ENCODE measurements at regions of chr9 and their contacts with region 1.

Region 1: GRCh38 chr9:112705768-112706427 is 12.0 kb downstream of the INIP start:
- DNase-seq: no peak
- ATAC-seq: peak; percentile 71 to 79 (median 76)
- H3K4me3 ChIP-seq: no peak overlapping the region
- H3K27ac ChIP-seq: no peak overlapping the region
- H3K4me1 ChIP-seq: peaks cover 0 to 10% (median 0%) of the 10 kb centered on the region in 12 donors
- H3K27me3 ChIP-seq: no peaks in the 10 kb centered on the region
- CTCF ChIP-seq: peak in 8 of 12 donors; percentile 8 to 48 (median 36)
- POLR2A ChIP-seq: no peak

Region 2: DNA sequence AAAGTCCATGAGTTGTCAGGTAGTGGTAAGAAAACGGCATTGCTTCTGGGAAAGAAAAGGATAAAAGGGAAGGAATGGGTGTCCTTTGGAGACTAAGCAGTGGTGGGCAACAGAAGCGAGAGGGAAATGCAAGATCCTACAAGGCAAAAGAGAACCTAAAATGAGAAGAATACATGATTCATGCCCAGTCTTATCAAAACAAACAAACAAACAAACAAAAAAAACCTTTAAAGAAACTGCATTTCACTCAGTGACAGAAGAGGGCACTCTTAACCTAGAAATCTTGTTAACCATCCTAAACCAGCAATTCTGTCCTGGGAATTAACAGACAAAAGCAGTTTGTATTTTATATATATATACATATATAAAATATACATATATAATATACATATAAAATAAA is 619.3 kb before region 1 on chr9:
- intact Hi-C with region 1: loop called in 5 of 10 experiments (anchors 10 kb)
- DNase-seq: no peak
- ATAC-seq: no peak
- H3K4me3 ChIP-seq: no peak overlapping the region
- H3K27ac ChIP-seq: no peak overlapping the region
- H3K4me1 ChIP-seq: peaks cover 0 to 1% (median 0%) of the 10 kb centered on the region in 12 donors
- H3K27me3 ChIP-seq: no peaks in the 10 kb centered on the region
- CTCF ChIP-seq: peak in 11 of 12 donors; percentile 37 to 70 (median 64)
- POLR2A ChIP-seq: no peak

Region 3: DNA sequence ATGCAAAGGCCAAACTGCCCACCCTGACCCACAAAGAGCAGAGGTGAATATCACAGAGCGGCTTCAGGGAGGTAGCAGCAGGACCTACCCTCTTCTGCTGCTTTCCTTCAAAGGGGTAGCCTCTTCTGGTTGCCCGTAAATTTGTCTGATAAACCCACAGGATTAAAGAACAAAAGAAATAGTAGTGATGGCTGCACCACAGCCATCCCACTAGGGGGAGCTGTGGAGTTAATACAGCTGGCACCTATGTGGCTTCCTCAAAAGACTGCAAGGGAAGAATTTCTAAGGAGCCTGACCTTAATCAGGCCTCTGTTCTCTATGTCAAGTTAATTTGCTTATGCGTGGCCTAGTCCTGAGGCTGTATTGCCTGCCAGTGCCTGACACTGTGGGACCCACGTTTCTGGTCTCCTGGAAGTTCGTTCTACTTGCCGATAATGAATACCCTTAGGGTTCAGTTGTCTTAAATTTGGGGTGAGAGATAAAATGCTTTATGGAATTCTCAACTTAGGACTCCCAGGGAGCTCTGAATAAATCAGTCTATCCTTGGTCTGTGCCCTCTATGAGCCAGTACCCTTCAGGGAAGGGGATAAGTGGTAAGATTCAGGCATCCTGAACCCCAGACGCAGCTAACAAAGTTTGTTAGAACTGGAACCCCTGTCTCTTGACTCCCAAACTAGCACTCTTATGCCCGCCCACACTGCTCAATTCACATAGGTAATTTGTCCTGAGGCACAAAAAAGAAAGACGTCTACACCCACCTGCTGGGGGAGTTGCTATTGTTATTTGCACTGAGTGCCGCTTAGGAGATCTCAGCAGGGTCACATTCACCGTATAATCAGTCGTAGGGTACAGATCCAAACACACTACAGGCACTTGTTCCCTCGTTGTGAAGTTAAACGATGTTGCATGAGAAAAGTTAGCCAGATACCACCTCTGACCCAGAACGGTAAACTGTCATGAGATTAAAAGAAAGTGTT is 607.9 kb before region 1 on chr9:
- intact Hi-C with region 1: loop called in 4 of 10 experiments (anchors 10 kb)
- DNase-seq: peak in 4 of 5 donors; percentile 47 to 68 (median 54)
- ATAC-seq: peak; percentile 42 to 86 (median 82)
- H3K4me3 ChIP-seq: no peak overlapping the region
- H3K27ac ChIP-seq: no peak overlapping the region
- H3K4me1 ChIP-seq: peaks cover 0 to 53% (median 0%) of the 10 kb centered on the region in 12 donors
- H3K27me3 ChIP-seq: no peaks in the 10 kb centered on the region
- CTCF ChIP-seq: peak; percentile 79 to 95 (median 90)
- POLR2A ChIP-seq: no peak

Region 4: GRCh38 chr9:112443200-112443599 is 262.7 kb before region 1 on chr9:
- intact Hi-C with region 1: loop called in 3 of 10 experiments (anchors 10 kb)
- DNase-seq: no peak
- ATAC-seq: no peak
- H3K4me3 ChIP-seq: no peak overlapping the region
- H3K27ac ChIP-seq: no peak overlapping the region
- H3K4me1 ChIP-seq: peaks cover 0 to 13% (median 0%) of the 10 kb centered on the region in 12 donors
- H3K27me3 ChIP-seq: no peaks in the 10 kb centered on the region
- CTCF ChIP-seq: peak in 10 of 12 donors; percentile 17 to 52 (median 34)
- POLR2A ChIP-seq: no peak

Region 5: DNA sequence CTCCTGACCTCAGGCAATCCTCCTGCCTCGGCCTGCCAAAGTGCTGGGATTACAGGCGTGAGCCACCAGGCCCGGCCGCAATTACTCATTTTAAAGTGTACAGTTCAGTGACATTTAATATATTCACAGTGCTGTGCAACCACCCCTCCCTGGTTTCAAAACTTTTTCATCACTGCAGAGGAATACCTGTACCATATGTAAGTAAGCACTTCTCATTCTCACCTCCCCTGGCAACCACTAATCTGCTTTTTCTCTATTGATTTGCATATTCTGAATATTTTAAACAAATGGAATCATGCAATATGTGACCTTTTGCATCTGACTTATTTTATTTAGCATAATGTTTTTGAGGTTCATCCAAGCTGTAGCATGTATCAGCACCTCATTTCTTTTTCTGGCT is 240.5 kb before region 1 on chr9:
- intact Hi-C with region 1: loop called in 3 of 10 experiments (anchors 5 to 10 kb)
- DNase-seq: no peak
- ATAC-seq: no peak
- H3K4me3 ChIP-seq: no peak overlapping the region
- H3K27ac ChIP-seq: no peak overlapping the region
- H3K4me1 ChIP-seq: no peaks in the 10 kb centered on the region
- H3K27me3 ChIP-seq: no peaks in the 10 kb centered on the region
- CTCF ChIP-seq: no peak
- POLR2A ChIP-seq: no peak

Region 6: DNA sequence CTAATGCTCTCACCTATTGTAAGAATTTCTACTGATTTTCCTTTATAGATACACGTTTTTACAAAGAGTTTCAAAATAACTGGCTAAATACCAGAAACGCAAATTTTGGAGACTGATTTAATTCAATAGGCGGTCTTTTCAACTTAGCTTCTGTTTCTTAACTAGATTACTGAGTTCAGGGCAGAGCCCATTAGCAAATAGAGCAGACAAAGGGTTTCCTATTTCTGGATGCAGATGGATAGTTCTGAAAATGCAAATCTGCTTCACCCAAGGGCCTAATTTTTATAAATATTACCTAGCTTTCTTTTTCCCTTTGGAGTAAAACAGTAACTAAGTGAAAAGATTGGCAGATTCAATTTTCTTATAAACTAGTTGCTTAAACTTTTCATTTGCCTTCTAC is 232.9 kb before region 1 on chr9:
- intact Hi-C with region 1: loop called in 3 of 10 experiments (anchors 5 to 10 kb)
- DNase-seq: no peak
- ATAC-seq: no peak
- H3K4me3 ChIP-seq: no peak overlapping the region
- H3K27ac ChIP-seq: no peak overlapping the region
- H3K4me1 ChIP-seq: no peaks in the 10 kb centered on the region
- H3K27me3 ChIP-seq: no peaks in the 10 kb centered on the region
- CTCF ChIP-seq: no peak
- POLR2A ChIP-seq: no peak

Region 7: GRCh38 chr9:112486221-112487007 is 219.5 kb before region 1 on chr9 and contains the start of gene KIAA1958:
- intact Hi-C with region 1: loop called in 2 of 10 experiments (anchors 10 kb)
- DNase-seq: peak; percentile 72 to 91 (median 89)
- ATAC-seq: peak; percentile 77 to 94 (median 93)
- H3K4me3 ChIP-seq: peak within 1 kb of the TSS; percentile 53 to 96 (median 84)
- H3K27ac ChIP-seq: peak within 1 kb of the TSS; percentile 29 to 87 (median 70)
- H3K4me1 ChIP-seq: peaks cover 0 to 23% (median 8%) of the 10 kb centered on the region in 12 donors
- H3K27me3 ChIP-seq: no peaks in the 10 kb centered on the region
- CTCF ChIP-seq: no peak
- POLR2A ChIP-seq: peak in 1 of 2 donors; percentile 36
- total RNA-seq, gene KIAA1958: 3.1 to 8.5 (median 6.0) TPM

Region 8: DNA sequence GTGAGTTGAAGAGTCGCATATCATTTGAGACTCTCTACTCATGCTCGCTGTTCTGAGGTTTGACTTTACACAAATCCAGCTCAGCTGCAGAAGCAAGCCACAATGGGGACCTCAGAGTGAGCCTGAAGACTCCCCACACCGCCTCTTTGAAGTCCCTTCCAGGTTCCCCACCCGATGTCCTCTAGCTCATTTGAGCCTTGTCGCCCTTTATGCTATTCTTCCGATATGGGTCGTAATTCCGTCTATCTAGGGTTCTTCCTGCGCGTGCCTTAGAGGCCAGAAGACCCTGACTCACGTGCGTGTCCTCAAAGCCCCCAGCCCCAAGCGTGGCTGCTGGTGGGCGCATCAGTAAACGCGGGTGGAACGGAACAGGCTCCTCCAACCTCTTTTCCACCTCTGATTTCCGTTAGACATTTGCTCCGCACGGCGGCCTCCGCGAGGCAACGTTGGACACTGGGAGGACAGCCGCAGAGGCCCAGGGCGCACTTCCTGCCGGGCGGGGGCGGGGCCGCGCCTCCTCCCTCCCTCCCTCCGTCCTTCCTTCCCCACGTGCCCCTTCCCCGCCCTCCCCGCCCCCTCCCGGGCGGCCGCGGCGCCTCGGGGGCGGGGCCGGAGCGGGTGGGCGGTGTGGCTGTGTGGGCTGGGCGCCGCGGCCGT is 44.3 kb after region 1 on chr9 and contains the start of gene SNX30:
- intact Hi-C with region 1: no loop called
- DNase-seq: peak; percentile 91 to 94 (median 92)
- ATAC-seq: peak; percentile 95 to 97 (median 96)
- H3K4me3 ChIP-seq: peak within 1 kb of the TSS; percentile 77 to 99 (median 96)
- H3K27ac ChIP-seq: peak within 1 kb of the TSS; percentile 60 to 95 (median 80)
- H3K4me1 ChIP-seq: peaks cover 0 to 61% (median 24%) of the 10 kb centered on the region in 12 donors
- H3K27me3 ChIP-seq: no peaks in the 10 kb centered on the region
- CTCF ChIP-seq: peak in 3 of 12 donors; percentile 19 to 34 (median 33)
- POLR2A ChIP-seq: peak in 1 of 2 donors; percentile 83
- total RNA-seq, gene SNX30: 3.2 to 10.3 (median 4.1) TPM

Measured in heart left ventricle (tissue), 16 donors.